A549 (cell line): ENCODE measurements at regions of chr4 and their contacts with region 1.

Region 1: DNA sequence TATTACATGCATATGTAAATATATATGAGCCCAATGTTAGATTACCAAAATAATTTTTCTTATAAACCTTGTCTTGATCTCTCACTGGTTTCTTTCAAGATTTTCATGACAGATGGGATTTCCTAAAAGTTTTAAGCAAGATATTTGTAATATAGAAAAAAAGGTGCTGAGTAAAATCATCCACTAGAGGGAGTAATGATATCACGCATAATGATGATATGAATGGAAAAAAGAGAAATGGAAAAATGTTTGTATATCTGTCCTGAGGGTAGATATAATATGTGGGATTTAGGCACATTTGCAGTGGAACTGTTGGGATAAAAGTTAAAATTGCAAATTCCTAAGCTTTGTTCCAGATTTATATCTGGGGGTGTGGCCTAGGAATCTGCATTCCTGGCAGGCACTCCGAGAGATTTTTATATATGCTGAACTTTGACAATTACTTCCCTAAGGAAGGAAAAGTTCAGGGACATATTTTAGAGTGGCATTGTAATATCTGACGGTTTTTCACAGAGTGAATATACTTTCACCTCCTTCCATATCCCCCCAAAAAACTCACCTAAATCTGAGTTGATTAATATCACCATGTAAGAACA is 60.5 kb downstream of the TMA16 start:
- DNase-seq: no peak
- ATAC-seq: peak in 1 of 2 experiments; percentile 46; a peak in 1 of 6 replicates
- H3K4me3 ChIP-seq: no peak overlapping the region
- H3K27ac ChIP-seq: no peak overlapping the region
- H3K4me1 ChIP-seq: no peaks in the 10 kb centered on the region
- CTCF ChIP-seq: peak; percentile 62
- EP300 ChIP-seq: no peak
- POLR2A ChIP-seq: no peak
- RAD21 ChIP-seq: peak; percentile 57 to 62

Region 2: GRCh38 chr4:163335384-163335783 is 219.6 kb before region 1 on chr4:
- CTCF ChIA-PET with region 1: no interaction called
- POLR2A ChIA-PET with region 1: no interaction called
- DNase-seq: no peak
- ATAC-seq: no peak
- H3K4me3 ChIP-seq: no peak overlapping the region
- H3K27ac ChIP-seq: no peak overlapping the region
- H3K4me1 ChIP-seq: peaks cover 6% of the 10 kb centered on the region; the same call in 1 of the 3 replicates
- CTCF ChIP-seq: no peak
- EP300 ChIP-seq: no peak
- POLR2A ChIP-seq: no peak
- RAD21 ChIP-seq: no peak

Region 3: GRCh38 chr4:163367651-163368050 is 187.3 kb before region 1 on chr4:
- CTCF ChIA-PET with region 1: no interaction called
- POLR2A ChIA-PET with region 1: no interaction called
- DNase-seq: no peak
- ATAC-seq: no peak
- H3K4me3 ChIP-seq: no peak overlapping the region
- H3K27ac ChIP-seq: no peak overlapping the region
- H3K4me1 ChIP-seq: no peaks in the 10 kb centered on the region
- CTCF ChIP-seq: no peak
- EP300 ChIP-seq: no peak
- POLR2A ChIP-seq: no peak
- RAD21 ChIP-seq: no peak

Region 4: DNA sequence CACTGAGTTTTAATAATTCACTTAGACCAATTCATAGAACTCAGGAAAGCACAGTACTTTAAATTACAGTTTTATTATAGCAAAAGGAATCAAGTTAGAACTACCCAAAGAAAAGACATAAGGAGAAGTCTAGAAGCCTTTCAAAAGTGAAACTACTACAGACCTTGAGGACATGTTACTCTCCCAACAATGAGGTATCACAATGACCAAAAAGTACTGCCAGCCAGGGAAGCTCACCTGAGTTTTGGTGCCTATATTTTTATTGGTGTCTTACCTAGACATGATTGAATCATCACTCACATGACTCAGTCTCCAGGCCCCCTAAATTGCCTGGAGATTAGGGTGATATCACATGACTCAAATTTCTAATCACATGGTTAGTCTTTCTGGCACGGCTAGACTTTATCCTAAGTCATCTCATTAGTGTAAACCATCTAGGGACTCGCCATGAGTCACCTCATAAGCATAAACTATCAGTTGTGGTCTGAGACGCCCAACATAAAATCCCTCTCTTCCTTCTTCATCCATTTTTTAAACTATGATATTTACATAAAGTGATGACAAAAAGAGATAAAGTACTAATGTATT is 311.9 kb after region 1 on chr4:
- CTCF ChIA-PET with region 1: no interaction called
- POLR2A ChIA-PET with region 1: no interaction called
- DNase-seq: no peak
- ATAC-seq: no peak
- H3K4me3 ChIP-seq: no peak overlapping the region
- H3K27ac ChIP-seq: no peak overlapping the region
- H3K4me1 ChIP-seq: no peaks in the 10 kb centered on the region
- CTCF ChIP-seq: no peak
- EP300 ChIP-seq: no peak
- POLR2A ChIP-seq: no peak
- RAD21 ChIP-seq: no peak

Region 5: DNA sequence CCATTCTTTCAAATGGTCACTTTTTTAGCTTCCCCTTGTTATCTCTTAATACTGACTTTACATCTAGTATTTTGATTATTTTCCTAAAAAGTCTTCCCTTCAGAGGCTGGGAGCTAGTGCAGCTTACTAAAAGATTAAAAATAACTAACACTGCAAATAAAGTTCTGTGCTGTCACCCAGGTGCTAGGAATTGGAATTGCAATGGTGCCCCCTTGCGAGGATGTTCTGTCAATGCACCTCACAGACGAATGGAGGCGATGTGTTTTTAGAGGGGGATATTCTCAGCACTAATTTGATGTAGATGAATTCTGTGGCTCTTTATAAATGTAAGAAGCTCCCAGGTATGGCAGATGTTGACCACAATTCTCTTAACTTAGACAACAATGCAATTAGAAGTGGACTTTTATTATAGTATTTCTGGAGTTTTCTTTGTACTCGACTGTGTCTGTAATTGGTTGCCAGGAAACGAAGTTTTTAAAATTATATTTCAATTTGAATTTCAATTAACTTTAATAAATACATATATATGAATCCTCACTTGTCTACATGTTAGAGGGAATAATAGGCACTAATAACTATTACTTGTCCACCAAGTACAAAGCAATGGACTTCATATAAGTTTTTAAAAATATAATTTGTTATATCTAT is 1177.0 kb after region 1 on chr4:
- CTCF ChIA-PET with region 1: interaction called, 24 read pairs
- POLR2A ChIA-PET with region 1: no interaction called
- DNase-seq: peak; percentile 25 to 31
- ATAC-seq: peak in 1 of 2 experiments; percentile 69; a peak in 2 of 6 replicates
- H3K4me3 ChIP-seq: no peak overlapping the region
- H3K27ac ChIP-seq: no peak overlapping the region
- H3K4me1 ChIP-seq: no peaks in the 10 kb centered on the region
- CTCF ChIP-seq: peak; percentile 70
- EP300 ChIP-seq: no peak
- POLR2A ChIP-seq: no peak
- RAD21 ChIP-seq: peak; percentile 72 to 73